CD8-positive, alpha-beta T cell (primary cell): ENCODE measurements at regions of chr1 and their contacts with region 1.

Region 1: DNA sequence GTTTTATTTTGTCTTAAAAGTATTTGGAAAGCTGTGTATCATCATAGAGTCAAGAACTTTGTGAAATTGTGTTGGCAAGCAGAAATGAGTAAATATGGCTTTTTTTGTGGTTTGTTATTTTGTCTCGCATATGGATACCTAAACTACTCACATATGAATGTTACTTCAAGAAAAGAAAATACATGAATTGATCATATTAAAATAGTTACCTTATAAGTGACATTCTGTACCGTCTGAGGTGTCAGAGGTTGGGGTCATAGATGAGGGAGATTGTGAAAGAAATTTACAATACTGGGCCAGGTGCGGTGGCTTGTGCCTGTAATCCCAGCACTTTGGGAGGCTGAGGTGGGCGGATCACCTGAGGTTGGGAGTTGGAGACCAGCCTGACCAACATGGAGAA is 31.3 kb upstream of the AXDND1 start:
- DNase-seq: no peak
- ATAC-seq: no peak
- H3K4me3 ChIP-seq: no peak overlapping the region
- H3K4me3 Mint-ChIP-seq: no peak overlapping the region
- H3K27ac ChIP-seq: no peak overlapping the region
- H3K27ac Mint-ChIP-seq: no peak overlapping the region
- H3K4me1 ChIP-seq: no peaks in the 10 kb centered on the region
- H3K4me1 Mint-ChIP-seq: peaks cover 13% of the 10 kb centered on the region
- H3K27me3 ChIP-seq: no peaks in the 10 kb centered on the region
- H3K27me3 Mint-ChIP-seq: no peaks in the 10 kb centered on the region
- CTCF ChIP-seq: no peak

Region 2: DNA sequence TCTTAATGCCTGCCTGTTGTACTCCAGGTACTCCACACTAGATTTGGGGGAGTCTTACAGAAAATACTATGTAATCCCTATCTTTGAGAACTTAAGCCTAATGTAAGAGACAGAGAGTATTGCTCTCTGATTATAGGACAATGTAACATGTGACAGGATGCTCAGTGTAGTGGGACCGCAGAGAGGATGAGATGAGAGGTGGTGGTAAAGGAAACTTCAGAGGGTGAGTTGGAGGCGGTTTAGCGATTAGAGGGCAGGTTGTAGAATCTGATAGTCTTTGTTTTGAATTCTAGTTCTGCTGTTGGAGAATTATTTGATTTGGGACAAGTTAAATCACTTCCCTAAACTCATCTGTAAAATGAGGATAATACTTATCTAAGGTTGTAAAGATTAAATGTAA is 35.5 kb before region 1 on chr1:
- CTCF ChIA-PET with region 1: no interaction called
- POLR2A ChIA-PET with region 1: no interaction called
- intact Hi-C with region 1: loop called in 1 of 2 experiments (anchors 5 kb)
- DNase-seq: peak in 8 of 9 experiments; percentile 38 to 78 (median 58)
- ATAC-seq: peak; percentile 82
- H3K4me3 ChIP-seq: no peak overlapping the region
- H3K4me3 Mint-ChIP-seq: peak overlapping the region; percentile 27
- H3K27ac ChIP-seq: peak overlapping the region in 1 of 2 experiments; percentile 9
- H3K27ac Mint-ChIP-seq: peak overlapping the region; percentile 60
- H3K4me1 ChIP-seq: peaks cover 65% of the 10 kb centered on the region
- H3K4me1 Mint-ChIP-seq: peaks cover 76% of the 10 kb centered on the region
- H3K27me3 ChIP-seq: no peaks in the 10 kb centered on the region
- H3K27me3 Mint-ChIP-seq: no peaks in the 10 kb centered on the region
- CTCF ChIP-seq: no peak